ENCODE measurements at regions of chr11 and their contacts with region 1.

Region 1: DNA sequence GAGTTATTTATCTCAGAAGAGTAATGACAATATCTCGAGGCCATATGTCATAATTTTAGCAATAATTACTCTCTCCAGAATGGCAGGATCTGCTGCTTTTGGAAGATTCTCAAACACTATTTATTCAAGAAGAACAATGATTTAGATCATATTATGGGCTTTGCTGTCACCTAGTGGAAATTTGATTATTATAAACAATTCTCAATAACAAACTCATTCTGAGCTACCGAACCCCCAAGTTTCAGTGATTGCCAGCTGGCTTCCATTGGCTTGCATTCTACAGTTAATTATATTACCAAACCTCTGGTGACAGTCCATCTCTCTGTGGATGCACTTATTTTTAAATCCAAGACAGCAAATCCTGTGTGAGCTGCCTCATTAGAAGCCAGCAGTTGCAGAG is 27.9 kb upstream of the SLC36A4 start:
- DNase-seq: peak; percentile 28
- H3K4me3 ChIP-seq: no peak overlapping the region
- H3K27ac ChIP-seq: no peak overlapping the region
- H3K4me1 ChIP-seq: no peaks in the 10 kb centered on the region
- CTCF ChIP-seq: peak; percentile 70

Region 2: DNA sequence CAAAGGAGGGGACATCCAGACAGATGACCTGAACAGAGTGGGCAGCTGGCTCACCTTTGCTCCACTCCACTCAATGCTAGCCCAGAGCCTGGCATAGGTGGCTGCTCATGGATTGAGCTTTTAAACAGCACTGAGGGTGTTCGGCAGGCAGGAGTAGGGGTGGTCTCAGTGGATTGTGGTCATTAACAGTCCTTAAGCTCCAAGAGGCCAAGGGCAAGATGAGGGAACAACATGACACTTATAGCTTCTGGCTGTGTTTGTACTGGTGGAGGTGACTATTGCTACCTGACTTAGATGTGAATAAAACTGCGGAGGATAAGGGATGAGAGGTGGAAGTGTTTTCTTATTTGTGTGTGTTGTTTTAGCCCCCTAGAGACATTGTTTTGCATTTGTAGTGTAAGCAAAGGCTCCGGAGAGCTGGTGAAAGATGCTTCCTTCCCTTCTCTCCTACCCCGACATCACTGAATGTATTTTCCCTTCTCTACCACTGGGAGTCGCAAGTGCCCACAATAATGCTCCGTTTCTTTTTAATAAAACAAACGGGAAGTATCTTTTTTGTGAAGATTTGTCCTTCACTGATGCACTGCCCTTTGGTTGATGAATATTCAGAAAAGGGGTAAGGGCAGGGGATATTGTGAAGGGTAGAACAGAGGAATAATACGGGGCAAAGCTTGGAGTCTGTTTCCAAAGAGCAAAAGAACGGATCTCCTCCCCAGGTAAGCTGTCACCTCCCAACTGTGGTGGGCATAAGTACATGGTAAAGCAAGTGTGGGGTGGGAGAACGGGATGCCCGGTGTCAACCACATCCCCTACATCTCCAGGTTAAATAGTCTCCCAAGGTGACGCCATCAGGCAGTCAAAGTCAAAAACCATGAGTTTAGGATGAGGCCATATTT is 283.7 kb before region 1 on chr11:
- CTCF ChIA-PET with region 1: no interaction called
- POLR2A ChIA-PET with region 1: no interaction called
- intact Hi-C with region 1: loop called (anchors 5 kb)
- DNase-seq: peak; percentile 33
- H3K4me3 ChIP-seq: no peak overlapping the region
- H3K27ac ChIP-seq: no peak overlapping the region
- H3K4me1 ChIP-seq: no peaks in the 10 kb centered on the region
- CTCF ChIP-seq: peak; percentile 83